ENCODE measurements at regions of chr10 and their contacts with region 1.

Region 1: GRCh38 chr10:63465293-63466143 is at the start of gene JMJD1C:
- DNase-seq: peak; percentile 85
- ATAC-seq: peak; percentile 90
- total RNA-seq, gene JMJD1C: 141 TPM

Region 2: GRCh38 chr10:63173468-63174232 is 291.9 kb before region 1 on chr10:
- intact Hi-C with region 1: no loop called
- DNase-seq: no peak
- ATAC-seq: peak; percentile 42

Region 3: GRCh38 chr10:63629363-63630084 is 164.0 kb after region 1 on chr10:
- intact Hi-C with region 1: loop called (anchors 10 kb)
- DNase-seq: peak; percentile 98
- ATAC-seq: peak; percentile 91

Region 4: GRCh38 chr10:63666836-63667383 is 201.4 kb after region 1 on chr10:
- intact Hi-C with region 1: no loop called
- DNase-seq: no peak
- ATAC-seq: peak; percentile 57